Right ventricle myocardium inferior (tissue), 1 donor: ENCODE measurements at regions of chr9 and their contacts with region 1.

Region 1: GRCh38 chr9:125241000-125241862 is at the start of gene HSPA5:
- DNase-seq: peak; percentile 100
- ATAC-seq: peak; percentile 98
- total RNA-seq, gene HSPA5: 195 TPM

Region 2: DNA sequence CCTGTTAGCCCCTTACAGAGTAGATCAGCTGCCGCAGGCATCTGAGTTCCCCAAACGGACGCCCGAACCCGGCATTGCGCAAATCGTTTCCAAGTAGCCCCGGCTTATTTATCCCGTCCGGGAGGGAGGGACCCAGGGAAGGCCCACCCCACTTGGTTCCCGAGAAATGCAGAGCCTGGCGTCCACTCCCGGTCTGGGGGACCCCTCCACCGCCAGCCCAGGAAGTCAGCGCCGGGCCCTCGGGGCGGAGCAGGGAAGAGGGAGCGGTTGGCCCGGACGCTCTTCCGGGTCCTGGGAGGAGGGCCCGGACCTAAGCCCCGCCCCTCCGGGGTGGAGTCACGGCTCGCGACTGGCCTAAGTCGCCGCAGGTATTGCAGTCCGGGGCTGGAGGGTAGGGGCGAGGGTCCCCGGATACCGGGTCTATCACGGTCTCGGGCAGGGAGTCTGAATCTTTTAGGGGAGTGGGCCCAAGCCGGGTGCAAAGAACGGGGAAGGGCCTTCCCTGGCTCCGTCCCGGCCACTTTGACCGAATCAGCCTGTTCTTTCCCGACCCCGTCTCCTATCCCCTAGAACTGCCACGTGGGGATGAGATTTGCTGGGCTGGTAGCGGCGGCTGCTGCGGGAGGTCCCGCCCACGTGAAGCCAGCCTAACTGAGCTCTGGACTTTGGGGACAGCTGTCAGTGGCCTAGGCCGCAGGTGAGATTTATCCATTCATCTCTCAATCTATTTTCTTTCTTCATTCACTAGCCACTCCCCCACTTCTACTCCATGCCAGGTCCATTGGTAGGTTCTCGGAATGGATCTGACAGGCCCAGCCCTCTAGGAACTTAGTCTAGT is 40.8 kb before region 1 on chr9 and contains the start of gene RABEPK:
- intact Hi-C with region 1: loop called (anchors 5 kb)
- DNase-seq: peak; percentile 95
- ATAC-seq: peak; percentile 100
- total RNA-seq, gene RABEPK: 8.3 TPM

Region 3: GRCh38 chr9:125261501-125262293 is 20.5 kb after region 1 on chr9 and contains the start of gene GAPVD1:
- intact Hi-C with region 1: loop called (anchors 2 kb)
- DNase-seq: peak; percentile 94
- ATAC-seq: peak; percentile 99
- total RNA-seq, gene GAPVD1: 31.5 TPM

Region 4: GRCh38 chr9:125374443-125375309 is 133.4 kb after region 1 on chr9:
- intact Hi-C with region 1: no loop called
- DNase-seq: no peak
- ATAC-seq: peak; percentile 74

Region 5: DNA sequence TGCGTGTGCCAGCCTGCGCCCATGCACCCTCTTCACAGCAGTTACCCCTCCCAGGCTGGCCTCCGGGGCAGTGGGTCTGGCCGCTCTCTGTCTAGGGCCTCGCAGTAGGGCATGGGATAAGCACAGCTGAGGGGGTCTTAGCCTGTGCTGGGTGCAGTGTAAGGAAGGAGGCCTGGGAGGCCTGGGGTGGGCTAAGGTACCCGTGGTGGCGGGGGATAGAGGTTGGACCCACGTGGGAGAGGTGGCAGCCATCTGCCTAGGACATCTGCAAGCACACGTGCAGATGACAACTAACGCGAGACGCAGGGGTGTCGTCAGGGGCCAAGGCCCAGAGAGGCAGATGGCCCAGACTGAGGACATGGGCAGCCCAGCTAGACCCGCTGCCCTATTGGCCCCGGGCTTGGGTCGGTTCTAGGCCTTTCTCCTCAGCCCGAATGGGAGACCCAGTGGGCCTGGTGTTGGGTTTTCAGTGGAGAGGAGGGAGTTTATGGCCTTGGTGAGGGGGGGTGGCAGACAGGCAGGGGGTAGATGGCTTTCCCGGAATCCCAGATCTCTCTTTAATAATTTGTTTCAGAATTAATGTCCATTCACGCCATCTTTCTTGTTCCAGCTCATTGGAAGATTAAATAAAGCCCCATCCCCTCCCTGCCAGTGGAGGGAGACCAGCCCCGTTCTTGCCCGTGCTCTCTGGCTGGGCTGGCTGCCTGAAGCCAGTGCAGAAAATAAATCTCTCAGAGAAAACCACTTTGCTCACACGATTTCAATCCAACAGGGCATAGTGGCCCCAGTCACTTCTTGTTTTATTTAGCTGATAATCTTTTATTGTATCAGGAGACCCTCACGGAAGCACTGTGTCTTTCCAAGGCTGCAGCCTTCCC is 174.6 kb after region 1 on chr9:
- intact Hi-C with region 1: no loop called
- DNase-seq: no peak
- ATAC-seq: peak; percentile 18